ENCODE measurements at regions of chr12 and their contacts with region 1.

Region 1: GRCh38 chr12:76020731-76021672 is 10.6 kb downstream of the PHLDA1 start:
- DNase-seq: peak; percentile 84
- ATAC-seq: peak; percentile 61
- H3K4me3 ChIP-seq: no peak overlapping the region
- H3K27ac ChIP-seq: peak overlapping the region; percentile 88
- H3K4me1 ChIP-seq: peaks cover 49 to 88% of the 10 kb centered on the region in 2 experiments
- H3K27me3 ChIP-seq: no peaks in the 10 kb centered on the region
- CTCF ChIP-seq: no peak
- POLR2A ChIP-seq: no peak
- RAD21 ChIP-seq: peak; percentile 14; the same call in 1 of the 2 replicates

Region 2: GRCh38 chr12:75623631-75624118 is 397.3 kb before region 1 on chr12:
- CTCF ChIA-PET with region 1: no interaction called
- POLR2A ChIA-PET with region 1: no interaction called
- RAD21 ChIA-PET with region 1: no interaction called
- intact Hi-C with region 1: loop called (anchors 2 kb)
- DNase-seq: peak; percentile 89
- ATAC-seq: peak; percentile 92
- H3K4me3 ChIP-seq: no peak overlapping the region
- H3K27ac ChIP-seq: peak overlapping the region; percentile 99
- H3K4me1 ChIP-seq: peaks cover 39 to 70% of the 10 kb centered on the region in 2 experiments
- H3K27me3 ChIP-seq: no peaks in the 10 kb centered on the region
- CTCF ChIP-seq: peak; percentile 49 to 64 (median 51); a peak in 5 of 6 replicates
- POLR2A ChIP-seq: peak; percentile 26
- RAD21 ChIP-seq: peak; percentile 81

Region 3: DNA sequence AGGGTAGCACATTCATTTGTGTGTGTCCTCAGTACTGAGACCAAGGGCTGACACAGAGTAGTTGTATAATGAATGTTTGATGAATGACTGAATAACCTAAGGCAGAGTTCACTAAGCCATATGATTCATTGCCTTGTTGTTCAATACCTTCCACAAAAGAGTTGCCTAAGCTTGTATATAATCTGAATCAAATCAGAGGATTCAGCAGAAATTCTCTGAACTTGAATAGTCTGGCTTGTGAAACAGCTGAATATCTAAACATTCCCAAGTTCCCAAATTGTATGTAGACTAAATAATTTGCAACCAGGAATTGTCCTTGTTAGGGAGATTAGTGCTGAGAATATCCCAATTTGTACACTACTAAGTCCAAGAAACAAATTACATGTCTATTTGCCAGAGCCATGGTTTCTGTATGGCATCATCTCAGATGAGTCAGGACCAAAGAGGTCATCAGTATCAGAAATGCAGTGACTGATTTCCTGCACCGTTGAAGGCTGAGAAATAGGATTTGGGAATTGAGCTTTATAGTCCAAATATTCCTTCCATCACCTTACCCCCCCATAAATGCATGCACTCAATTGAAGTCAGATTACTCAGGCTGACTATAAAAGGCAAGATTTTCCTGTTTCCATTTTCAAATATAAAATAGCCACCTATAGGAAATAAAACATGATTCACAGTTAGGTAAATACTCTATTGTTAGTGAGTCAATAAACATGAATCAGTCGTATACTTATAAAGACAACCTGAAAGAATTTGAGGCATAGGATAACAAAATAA is 158.1 kb before region 1 on chr12:
- CTCF ChIA-PET with region 1: no interaction called
- POLR2A ChIA-PET with region 1: interaction called, 11 read pairs
- RAD21 ChIA-PET with region 1: no interaction called
- intact Hi-C with region 1: no loop called
- DNase-seq: peak; percentile 84
- ATAC-seq: peak; percentile 80
- H3K4me3 ChIP-seq: no peak overlapping the region
- H3K27ac ChIP-seq: peak overlapping the region; percentile 87
- H3K4me1 ChIP-seq: peaks cover 46 to 91% of the 10 kb centered on the region in 2 experiments
- H3K27me3 ChIP-seq: no peaks in the 10 kb centered on the region
- CTCF ChIP-seq: no peak
- POLR2A ChIP-seq: no peak
- RAD21 ChIP-seq: 0 out of 2 replicates have a peak, but pooled peaks have one; percentile 20

Region 4: GRCh38 chr12:75954041-75954440 is 67.0 kb before region 1 on chr12:
- CTCF ChIA-PET with region 1: no interaction called
- POLR2A ChIA-PET with region 1: interaction called, 3 read pairs
- RAD21 ChIA-PET with region 1: interaction called, 5 to 6 read pairs
- intact Hi-C with region 1: loop called (anchors 2 kb)
- DNase-seq: peak; percentile 87
- ATAC-seq: peak; percentile 67
- H3K4me3 ChIP-seq: 0 out of 4 replicates have a peak overlapping the region, but pooled peaks of 1 of the 2 experiments have one; percentile 2
- H3K27ac ChIP-seq: peak overlapping the region; percentile 100
- H3K4me1 ChIP-seq: peaks cover 61 to 88% of the 10 kb centered on the region in 2 experiments
- H3K27me3 ChIP-seq: no peaks in the 10 kb centered on the region
- CTCF ChIP-seq: no peak
- POLR2A ChIP-seq: no peak
- RAD21 ChIP-seq: no peak

Region 5: GRCh38 chr12:75971253-75971652 is 49.7 kb before region 1 on chr12:
- CTCF ChIA-PET with region 1: no interaction called
- POLR2A ChIA-PET with region 1: no interaction called
- RAD21 ChIA-PET with region 1: no interaction called
- intact Hi-C with region 1: no loop called
- DNase-seq: no peak
- ATAC-seq: no peak
- H3K4me3 ChIP-seq: no peak overlapping the region
- H3K27ac ChIP-seq: no peak overlapping the region
- H3K4me1 ChIP-seq: peaks cover 33 to 58% of the 10 kb centered on the region in 2 experiments
- H3K27me3 ChIP-seq: no peaks in the 10 kb centered on the region
- CTCF ChIP-seq: no peak
- POLR2A ChIP-seq: no peak
- RAD21 ChIP-seq: no peak

Measured in HCT116 (cell line).